ENCODE measurements at regions of chr16 and their contacts with region 1.

Region 1: GRCh38 chr16:30052671-30053372 is 12.7 kb upstream of the ALDOA start:
- DNase-seq: peak; percentile 95
- H3K4me3 Mint-ChIP-seq: peak overlapping the region; percentile 86
- H3K27ac Mint-ChIP-seq: peak overlapping the region; percentile 49
- H3K4me1 Mint-ChIP-seq: peaks cover 28% of the 10 kb centered on the region
- H3K27me3 Mint-ChIP-seq: no peaks in the 10 kb centered on the region

Region 2: DNA sequence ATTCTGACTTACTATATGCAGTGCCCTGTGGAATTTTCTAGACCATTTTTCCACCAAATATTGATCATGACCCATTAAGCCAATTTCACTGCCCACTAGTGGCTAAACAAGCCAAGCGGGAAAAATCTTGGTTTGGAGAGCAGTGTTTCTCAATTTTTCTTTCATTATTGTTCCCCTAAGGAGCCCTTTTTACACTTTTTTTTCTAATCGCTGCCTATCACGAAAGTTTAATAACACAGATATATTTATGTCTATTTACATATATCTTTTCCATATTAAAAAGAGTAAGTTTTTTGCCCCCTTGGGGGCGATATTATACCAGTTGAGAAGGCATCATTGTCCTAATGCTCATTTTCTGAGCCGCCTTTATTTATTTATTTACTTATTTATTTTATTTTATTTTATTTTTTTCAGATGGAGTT is 11.0 kb before region 1 on chr16:
- CTCF ChIA-PET with region 1: interaction called, 16 read pairs
- POLR2A ChIA-PET with region 1: no interaction called
- intact Hi-C with region 1: no loop called
- DNase-seq: no peak
- H3K4me3 Mint-ChIP-seq: no peak overlapping the region
- H3K27ac Mint-ChIP-seq: no peak overlapping the region
- H3K4me1 Mint-ChIP-seq: peaks cover 8% of the 10 kb centered on the region
- H3K27me3 Mint-ChIP-seq: peaks cover 3% of the 10 kb centered on the region

Measured in activated CD4-positive, alpha-beta memory T cell treated with anti-CD3 and anti-CD28 coated beads for 36 hours (primary cell).